ENCODE measurements at regions of chr14 and their contacts with region 1.

Region 1: DNA sequence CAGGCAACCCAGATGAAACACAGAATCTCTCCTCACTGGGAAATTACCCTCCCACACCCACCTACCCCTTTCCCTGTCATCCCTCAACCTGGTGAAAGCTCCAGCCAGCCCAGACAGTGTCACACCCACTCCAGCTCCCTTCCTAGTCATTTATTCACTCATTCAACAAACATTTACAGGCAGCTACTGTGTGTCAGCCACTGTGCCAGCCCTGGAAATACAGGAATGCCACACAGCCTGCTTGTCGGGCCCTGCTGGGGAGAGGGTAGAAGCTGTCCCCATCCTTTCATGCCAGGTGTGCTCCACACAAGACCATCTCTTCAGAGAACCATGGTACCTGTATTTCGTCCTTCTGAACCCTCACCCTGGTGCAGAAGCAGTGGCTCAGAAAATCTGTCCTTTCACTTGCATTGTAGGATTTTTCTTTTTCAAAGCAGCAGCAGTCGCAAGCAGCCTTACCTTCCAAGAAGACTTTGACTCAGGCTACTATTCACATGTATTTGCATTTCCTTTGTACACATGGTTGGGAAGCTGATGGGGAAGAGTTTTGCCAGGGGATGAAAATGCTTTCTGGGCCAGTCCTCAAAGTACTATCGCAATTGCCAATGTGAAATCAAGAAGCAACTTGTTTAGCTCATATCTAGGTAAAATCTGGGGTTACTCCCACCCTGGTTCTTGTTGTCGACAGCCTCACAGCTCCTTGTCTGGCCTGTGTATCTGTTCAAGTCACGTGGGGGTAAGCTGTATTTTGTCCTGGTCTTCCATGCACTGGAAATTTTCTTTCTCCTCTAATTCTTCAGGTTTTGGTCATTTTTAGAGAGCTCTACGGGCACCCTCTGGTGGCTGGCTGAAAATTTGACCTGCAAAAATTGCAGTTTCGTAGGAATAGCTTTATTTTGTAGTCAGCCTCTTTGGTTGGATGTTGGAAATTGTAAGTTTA is 147.4 kb upstream of the EGLN3 start:
- DNase-seq: peak; percentile 43 to 64
- H3K4me3 ChIP-seq: no peak overlapping the region
- H3K4me3 Mint-ChIP-seq: no peak overlapping the region
- H3K27ac Mint-ChIP-seq: peak overlapping the region; percentile 57
- H3K4me1 ChIP-seq: peaks cover 39% of the 10 kb centered on the region
- H3K4me1 Mint-ChIP-seq: peaks cover 30% of the 10 kb centered on the region
- H3K27me3 ChIP-seq: no peaks in the 10 kb centered on the region
- H3K27me3 Mint-ChIP-seq: no peaks in the 10 kb centered on the region
- CTCF ChIP-seq: peak; percentile 67 to 71

Region 2: DNA sequence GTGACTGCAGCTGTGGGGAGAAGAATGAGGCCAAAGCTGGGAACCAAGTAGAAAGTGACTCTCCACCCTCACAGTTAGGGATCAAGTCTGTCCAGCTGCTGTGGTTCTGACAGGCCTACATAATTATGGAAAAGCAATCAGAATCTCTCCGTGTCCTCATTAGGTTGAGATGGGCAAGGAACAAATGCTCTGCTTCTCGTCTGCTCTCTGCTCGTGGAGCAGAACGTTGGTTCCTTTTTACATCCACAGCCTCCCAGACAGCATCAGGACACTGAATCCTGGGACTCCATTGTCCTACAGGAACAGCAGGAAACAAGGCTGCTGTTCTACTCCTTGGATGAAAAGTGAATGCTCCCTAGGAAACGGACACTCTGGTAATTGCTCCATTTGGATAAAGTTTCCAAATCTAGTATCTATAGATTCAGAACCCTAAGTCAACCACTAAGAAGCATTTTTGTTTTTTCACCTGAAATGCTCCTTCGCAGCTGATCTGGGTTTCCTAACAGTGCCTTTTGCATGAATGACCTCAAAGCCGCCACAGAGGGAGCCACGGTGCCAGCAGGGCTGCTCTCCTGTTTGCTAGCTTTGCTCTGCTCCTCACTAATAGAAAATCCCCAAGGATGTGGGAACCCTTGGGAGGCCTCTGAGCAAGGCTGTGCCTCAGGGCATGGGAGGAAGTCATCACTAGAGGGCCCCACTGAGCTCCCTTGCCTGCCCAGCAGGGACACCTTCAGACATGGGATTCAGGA is 249.4 kb before region 1 on chr14:
- CTCF ChIA-PET with region 1: interaction called, 46 read pairs
- POLR2A ChIA-PET with region 1: no interaction called
- intact Hi-C with region 1: loop called (anchors 1 kb)
- DNase-seq: peak; percentile 83 to 84
- H3K4me3 ChIP-seq: no peak overlapping the region
- H3K4me3 Mint-ChIP-seq: no peak overlapping the region
- H3K27ac Mint-ChIP-seq: no peak overlapping the region
- H3K4me1 ChIP-seq: no peaks in the 10 kb centered on the region
- H3K4me1 Mint-ChIP-seq: peaks cover 8% of the 10 kb centered on the region
- H3K27me3 ChIP-seq: no peaks in the 10 kb centered on the region
- H3K27me3 Mint-ChIP-seq: no peaks in the 10 kb centered on the region
- CTCF ChIP-seq: peak; percentile 65 to 84

Region 3: DNA sequence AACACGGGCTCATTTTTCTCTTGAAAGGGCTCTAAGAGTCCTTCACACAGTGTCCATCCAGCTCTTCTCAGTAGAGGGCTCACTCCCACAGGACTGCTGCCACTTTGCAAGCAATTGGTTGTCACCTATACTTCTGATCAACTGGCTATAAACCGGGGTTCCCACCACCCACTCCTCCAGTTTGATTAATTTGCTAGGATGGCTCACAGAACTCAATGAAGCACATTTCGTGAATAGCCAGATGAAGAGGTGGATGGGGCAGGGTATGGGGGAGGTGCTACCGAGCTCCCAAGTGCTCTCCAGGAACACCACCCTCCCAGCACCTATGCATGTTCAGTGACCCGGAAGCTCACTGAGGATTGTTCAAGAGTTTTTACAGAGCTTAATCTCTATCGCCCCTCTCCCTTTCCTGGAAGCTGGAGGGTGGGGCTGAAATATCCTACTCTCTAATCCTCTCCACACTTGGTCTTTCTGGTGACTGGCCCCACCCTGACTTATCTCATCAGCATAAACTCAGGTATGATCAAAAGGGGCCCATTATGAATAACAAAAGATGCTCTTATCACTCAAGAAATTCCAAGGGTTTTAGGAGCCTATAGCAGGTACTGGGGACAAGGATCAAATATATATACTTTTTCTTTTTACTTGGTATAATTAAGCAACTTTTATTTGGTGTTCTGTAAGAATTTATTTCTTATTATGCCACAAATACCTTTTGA is 133.6 kb before region 1 on chr14:
- CTCF ChIA-PET with region 1: interaction called, 3 read pairs
- POLR2A ChIA-PET with region 1: no interaction called
- intact Hi-C with region 1: loop called (anchors 1 kb)
- DNase-seq: peak; percentile 38 to 48
- H3K4me3 ChIP-seq: no peak overlapping the region
- H3K4me3 Mint-ChIP-seq: peak overlapping the region; percentile 22
- H3K27ac Mint-ChIP-seq: peak overlapping the region; percentile 14
- H3K4me1 ChIP-seq: peaks cover 30% of the 10 kb centered on the region
- H3K4me1 Mint-ChIP-seq: peaks cover 23% of the 10 kb centered on the region
- H3K27me3 ChIP-seq: no peaks in the 10 kb centered on the region
- H3K27me3 Mint-ChIP-seq: no peaks in the 10 kb centered on the region
- CTCF ChIP-seq: peak in 1 of 2 experiments; percentile 19

Region 4: DNA sequence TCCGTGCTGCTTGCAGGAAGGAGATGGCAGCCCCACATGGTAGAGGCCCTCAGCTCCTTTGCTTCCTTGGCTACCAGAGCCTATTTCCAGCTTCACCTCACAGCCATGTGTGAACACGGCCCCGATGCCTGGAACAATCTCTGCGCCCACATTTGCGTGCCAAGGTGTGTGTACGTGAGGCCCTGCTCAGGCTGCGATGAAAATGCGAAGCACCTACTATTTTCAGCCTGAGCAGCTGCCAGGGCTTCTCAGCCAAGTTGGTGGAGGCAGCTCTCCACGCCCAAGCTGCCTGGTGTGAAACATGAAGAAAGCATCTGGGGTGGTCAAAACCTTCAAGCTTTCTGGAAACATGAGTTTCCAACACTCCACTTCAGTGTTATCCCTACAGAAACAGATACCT is 30.4 kb after region 1 on chr14:
- CTCF ChIA-PET with region 1: interaction called, 6 read pairs
- POLR2A ChIA-PET with region 1: no interaction called
- intact Hi-C with region 1: loop called (anchors 1 kb)
- DNase-seq: no peak
- H3K4me3 ChIP-seq: no peak overlapping the region
- H3K4me3 Mint-ChIP-seq: no peak overlapping the region
- H3K27ac Mint-ChIP-seq: no peak overlapping the region
- H3K4me1 ChIP-seq: peaks cover 18% of the 10 kb centered on the region
- H3K4me1 Mint-ChIP-seq: peaks cover 20% of the 10 kb centered on the region
- H3K27me3 ChIP-seq: no peaks in the 10 kb centered on the region
- H3K27me3 Mint-ChIP-seq: no peaks in the 10 kb centered on the region
- CTCF ChIP-seq: no peak

Region 5: DNA sequence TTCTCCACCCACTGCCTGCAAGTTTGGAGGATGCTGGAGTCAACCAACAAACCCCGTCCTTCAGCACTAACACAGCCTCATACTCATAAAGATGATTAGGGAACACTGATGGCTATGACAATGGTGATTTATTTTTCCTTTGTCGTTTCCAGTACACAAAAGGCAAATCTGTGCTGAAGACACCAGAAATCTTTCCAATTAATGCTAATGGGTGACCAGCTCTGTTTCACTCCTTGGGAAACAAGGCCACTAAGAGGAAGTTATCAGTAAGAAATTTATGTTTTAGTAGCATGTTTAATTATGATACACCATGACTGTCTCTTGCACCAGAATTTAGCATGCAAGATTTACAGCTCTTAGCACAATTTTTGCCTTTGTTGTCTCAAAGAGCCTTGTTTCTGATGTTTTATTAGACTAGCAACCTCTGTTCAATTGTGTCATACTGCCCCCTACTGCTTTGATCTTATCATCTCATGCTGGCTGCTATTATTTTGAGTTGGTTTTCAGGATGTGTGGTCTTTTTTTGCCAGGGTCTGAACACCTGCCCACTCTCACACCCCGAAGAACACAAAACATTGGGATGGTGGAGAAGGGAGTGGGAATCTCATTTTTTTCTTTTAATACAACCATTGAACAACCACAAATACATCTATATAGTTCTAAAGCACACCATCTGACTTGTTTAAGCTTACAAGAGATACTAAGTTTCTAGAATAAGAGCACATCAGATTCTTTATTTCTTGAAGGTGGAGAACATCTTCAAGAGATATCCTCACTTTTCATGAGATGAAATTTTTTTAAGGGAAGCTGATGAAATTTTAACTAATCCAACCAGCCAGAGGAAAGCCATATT is 202.8 kb after region 1 on chr14:
- CTCF ChIA-PET with region 1: interaction called, 4 read pairs
- POLR2A ChIA-PET with region 1: no interaction called
- intact Hi-C with region 1: loop called (anchors 2 kb)
- DNase-seq: peak in 1 of 2 experiments; percentile 64
- H3K4me3 ChIP-seq: no peak overlapping the region
- H3K4me3 Mint-ChIP-seq: no peak overlapping the region
- H3K27ac Mint-ChIP-seq: no peak overlapping the region
- H3K4me1 ChIP-seq: peaks cover 13% of the 10 kb centered on the region
- H3K4me1 Mint-ChIP-seq: peaks cover 18% of the 10 kb centered on the region
- H3K27me3 ChIP-seq: no peaks in the 10 kb centered on the region
- H3K27me3 Mint-ChIP-seq: no peaks in the 10 kb centered on the region
- CTCF ChIP-seq: peak; percentile 35 to 56

Region 6: GRCh38 chr14:34403643-34404042 is 305.3 kb after region 1 on chr14:
- CTCF ChIA-PET with region 1: no interaction called
- POLR2A ChIA-PET with region 1: no interaction called
- intact Hi-C with region 1: no loop called
- DNase-seq: no peak
- H3K4me3 ChIP-seq: no peak overlapping the region
- H3K4me3 Mint-ChIP-seq: no peak overlapping the region
- H3K27ac Mint-ChIP-seq: no peak overlapping the region
- H3K4me1 ChIP-seq: no peaks in the 10 kb centered on the region
- H3K4me1 Mint-ChIP-seq: no peaks in the 10 kb centered on the region
- H3K27me3 ChIP-seq: no peaks in the 10 kb centered on the region
- H3K27me3 Mint-ChIP-seq: no peaks in the 10 kb centered on the region
- CTCF ChIP-seq: no peak

Measured in Caco-2 (cell line).